Lower leg skin (tissue), 4 donors: ENCODE measurements at regions of chr13 and their contacts with region 1.

Region 1: GRCh38 chr13:97588993-97589392 is 155.0 kb downstream of the RAP2A start:
- DNase-seq: no peak
- H3K4me3 ChIP-seq: no peak overlapping the region
- CTCF ChIP-seq: no peak
- POLR2A ChIP-seq: no peak

Region 2: GRCh38 chr13:97067017-97067895 is 521.7 kb before region 1 on chr13:
- intact Hi-C with region 1: loop called (anchors 2 kb)
- DNase-seq: no peak
- H3K4me3 ChIP-seq: no peak overlapping the region
- CTCF ChIP-seq: no peak
- POLR2A ChIP-seq: no peak